ENCODE measurements at regions of chr11 and their contacts with region 1.

Region 1: DNA sequence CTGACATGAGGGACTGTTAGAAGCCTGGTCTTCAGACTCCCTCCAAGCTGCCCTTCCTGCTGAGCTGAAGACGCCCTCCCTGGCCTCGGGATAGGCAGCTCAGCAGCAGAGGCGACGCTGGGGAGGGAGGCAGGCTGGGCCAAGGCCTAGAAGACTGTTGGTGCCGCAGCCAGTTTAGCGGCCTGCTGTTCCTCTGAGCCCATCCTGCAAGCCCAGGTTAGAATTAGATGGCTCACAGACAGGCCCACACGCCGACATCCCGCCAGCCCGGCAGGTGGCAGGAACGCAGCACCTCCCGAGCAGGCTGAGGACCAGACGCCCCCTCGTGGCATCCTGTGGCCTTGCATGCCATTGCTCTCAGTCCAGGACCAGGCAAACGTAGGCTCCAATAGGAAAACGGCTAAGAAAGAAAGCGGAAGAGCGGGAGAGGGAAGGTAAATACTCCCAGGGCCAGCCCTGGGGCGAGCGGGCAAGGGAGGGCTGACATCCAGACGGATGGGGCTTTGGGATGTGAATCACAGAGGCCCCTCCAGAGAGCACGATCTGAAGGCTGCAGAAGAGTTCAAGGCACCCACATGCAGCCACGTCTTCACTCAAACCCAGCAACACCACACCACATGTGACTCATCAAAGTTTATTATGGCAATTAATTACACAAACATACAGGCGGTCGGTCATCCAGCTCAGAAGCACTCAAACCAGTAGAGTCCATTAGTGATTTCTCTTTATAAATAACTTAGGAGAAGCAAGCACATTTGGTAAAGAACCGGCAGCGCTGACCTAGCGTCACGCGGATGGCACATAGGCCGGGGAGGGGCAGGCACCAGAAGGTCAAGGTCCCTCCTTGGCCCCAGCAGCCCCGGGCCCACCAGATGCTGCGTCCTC is 27.6 kb downstream of the CD5 start:
- DNase-seq: peak; percentile 80
- H3K4me3 ChIP-seq: peak overlapping the region in 1 of 3 experiments; percentile 6
- H3K27ac ChIP-seq: peak overlapping the region; percentile 9
- H3K4me1 ChIP-seq: peaks cover 11% of the 10 kb centered on the region
- H3K27me3 ChIP-seq: no peaks in the 10 kb centered on the region
- CTCF ChIP-seq: peak; percentile 99 to 100

Region 2: DNA sequence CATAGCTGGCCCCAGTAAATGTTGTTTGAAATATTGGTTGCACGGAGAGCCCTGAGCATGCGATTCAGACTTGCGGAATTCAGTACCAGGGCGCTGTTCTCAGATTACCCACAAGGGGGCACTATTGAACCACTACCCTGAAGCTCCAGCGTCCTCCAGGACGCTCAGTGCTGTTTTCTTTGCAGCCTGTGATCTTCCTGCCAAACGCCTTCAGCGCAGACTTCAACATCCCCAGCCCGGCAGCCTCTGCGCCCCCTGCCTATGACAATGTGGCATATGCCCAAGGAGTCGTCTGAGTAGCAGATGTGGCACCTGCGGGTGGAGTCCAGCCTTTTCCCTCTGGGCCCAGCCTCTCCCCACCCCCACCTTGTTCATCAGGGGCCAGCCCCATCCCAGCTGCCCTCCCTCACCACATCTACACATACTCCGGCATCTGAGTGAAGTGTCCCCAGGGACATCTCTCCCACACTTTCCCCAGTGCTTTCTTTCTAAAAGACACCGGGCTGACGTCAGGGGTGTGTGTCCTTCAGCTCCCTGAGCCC is 354.4 kb before region 1 on chr11:
- CTCF ChIA-PET with region 1: no interaction called
- dilution Hi-C with region 1: no loop called
- in situ Hi-C with region 1: no loop called
- intact Hi-C with region 1: loop called (anchors 1 kb)
- DNase-seq: peak; percentile 74
- H3K4me3 ChIP-seq: no peak overlapping the region
- H3K27ac ChIP-seq: no peak overlapping the region
- H3K4me1 ChIP-seq: no peaks in the 10 kb centered on the region
- H3K27me3 ChIP-seq: no peaks in the 10 kb centered on the region
- CTCF ChIP-seq: peak; percentile 89 to 93

Region 3: DNA sequence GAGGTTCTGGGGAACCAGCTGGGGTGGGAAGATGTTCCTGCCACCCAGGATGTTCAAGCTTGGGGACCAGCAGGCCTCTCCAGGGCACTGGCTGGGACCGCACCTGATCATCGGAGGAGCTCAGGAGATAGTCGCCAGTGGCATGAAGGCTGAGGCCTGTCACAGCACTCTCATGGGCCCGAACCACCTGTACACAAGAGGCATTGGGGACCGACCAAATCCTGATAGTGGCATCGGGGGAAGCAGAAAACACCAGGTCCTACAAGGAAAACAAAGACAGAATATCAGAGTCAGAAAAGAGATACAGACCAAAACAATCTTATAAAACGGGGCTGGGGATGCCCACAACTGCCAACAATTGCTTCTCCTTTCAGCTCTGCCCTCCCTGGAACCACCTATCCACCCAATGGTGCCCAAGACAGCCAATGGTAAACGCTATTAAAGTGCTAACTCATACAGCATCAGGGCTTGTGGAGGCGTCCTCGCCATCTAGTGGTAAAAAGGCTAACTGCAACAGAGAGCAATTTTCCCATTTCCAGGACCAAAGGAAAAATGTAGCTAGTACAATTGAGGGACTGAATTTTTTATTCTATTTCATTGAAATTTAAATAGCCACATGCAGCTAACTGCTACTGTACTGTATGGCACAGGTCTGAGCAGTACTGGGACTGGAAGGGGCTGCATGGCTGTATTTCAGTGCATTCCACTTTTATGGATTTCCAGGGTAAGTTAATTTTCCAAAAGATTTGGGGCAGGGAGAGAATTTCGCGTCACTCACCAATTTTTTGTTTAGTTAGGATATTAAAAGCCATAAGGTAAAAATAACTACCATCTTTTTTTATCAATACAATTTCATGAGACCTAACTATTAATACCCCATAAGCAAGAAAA is 230.6 kb before region 1 on chr11:
- CTCF ChIA-PET with region 1: interaction called, 5 read pairs
- dilution Hi-C with region 1: no loop called
- in situ Hi-C with region 1: no loop called
- intact Hi-C with region 1: loop called (anchors 5 kb)
- DNase-seq: peak; percentile 51
- H3K4me3 ChIP-seq: no peak overlapping the region
- H3K27ac ChIP-seq: no peak overlapping the region
- H3K4me1 ChIP-seq: no peaks in the 10 kb centered on the region
- H3K27me3 ChIP-seq: no peaks in the 10 kb centered on the region
- CTCF ChIP-seq: peak; percentile 94 to 99

Region 4: DNA sequence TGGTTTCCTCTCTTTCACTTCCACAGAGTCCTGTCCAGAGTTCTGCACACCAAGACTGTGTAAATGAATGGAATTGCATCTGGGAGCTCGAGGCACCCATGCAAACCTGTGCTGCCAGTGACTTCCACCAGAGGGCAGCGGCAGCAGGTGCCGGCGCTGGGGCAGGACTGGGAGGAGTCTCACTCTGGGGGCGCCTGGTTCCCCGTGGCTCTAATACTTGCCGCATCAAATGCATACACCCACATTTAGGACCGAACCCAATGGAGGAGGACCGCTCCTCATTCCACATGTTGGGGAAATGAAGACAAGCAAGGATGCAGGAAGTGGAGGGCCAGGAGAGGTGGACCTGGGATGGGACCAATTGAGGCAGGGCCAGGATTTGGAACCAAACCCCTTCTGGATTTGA is 159.5 kb before region 1 on chr11:
- CTCF ChIA-PET with region 1: no interaction called
- dilution Hi-C with region 1: no loop called
- in situ Hi-C with region 1: no loop called
- intact Hi-C with region 1: loop called (anchors 1 kb)
- DNase-seq: peak; percentile 34
- H3K4me3 ChIP-seq: no peak overlapping the region
- H3K27ac ChIP-seq: no peak overlapping the region
- H3K4me1 ChIP-seq: peaks cover 6% of the 10 kb centered on the region
- H3K27me3 ChIP-seq: no peaks in the 10 kb centered on the region
- CTCF ChIP-seq: peak; percentile 91 to 94

Region 5: GRCh38 chr11:61152816-61153592 is 23.1 kb after region 1 on chr11:
- CTCF ChIA-PET with region 1: no interaction called
- dilution Hi-C with region 1: no loop called
- in situ Hi-C with region 1: no loop called
- intact Hi-C with region 1: loop called (anchors 2 kb)
- DNase-seq: peak; percentile 79
- H3K4me3 ChIP-seq: no peak overlapping the region
- H3K27ac ChIP-seq: peak overlapping the region; percentile 82
- H3K4me1 ChIP-seq: peaks cover 44% of the 10 kb centered on the region
- H3K27me3 ChIP-seq: no peaks in the 10 kb centered on the region
- CTCF ChIP-seq: no peak

Region 6: GRCh38 chr11:61187505-61188130 is 57.7 kb after region 1 on chr11:
- CTCF ChIA-PET with region 1: no interaction called
- dilution Hi-C with region 1: no loop called
- in situ Hi-C with region 1: no loop called
- intact Hi-C with region 1: loop called (anchors 1 kb)
- DNase-seq: peak; percentile 40
- H3K4me3 ChIP-seq: no peak overlapping the region
- H3K27ac ChIP-seq: no peak overlapping the region
- H3K4me1 ChIP-seq: no peaks in the 10 kb centered on the region
- H3K27me3 ChIP-seq: no peaks in the 10 kb centered on the region
- CTCF ChIP-seq: peak; percentile 92 to 99

Region 7: DNA sequence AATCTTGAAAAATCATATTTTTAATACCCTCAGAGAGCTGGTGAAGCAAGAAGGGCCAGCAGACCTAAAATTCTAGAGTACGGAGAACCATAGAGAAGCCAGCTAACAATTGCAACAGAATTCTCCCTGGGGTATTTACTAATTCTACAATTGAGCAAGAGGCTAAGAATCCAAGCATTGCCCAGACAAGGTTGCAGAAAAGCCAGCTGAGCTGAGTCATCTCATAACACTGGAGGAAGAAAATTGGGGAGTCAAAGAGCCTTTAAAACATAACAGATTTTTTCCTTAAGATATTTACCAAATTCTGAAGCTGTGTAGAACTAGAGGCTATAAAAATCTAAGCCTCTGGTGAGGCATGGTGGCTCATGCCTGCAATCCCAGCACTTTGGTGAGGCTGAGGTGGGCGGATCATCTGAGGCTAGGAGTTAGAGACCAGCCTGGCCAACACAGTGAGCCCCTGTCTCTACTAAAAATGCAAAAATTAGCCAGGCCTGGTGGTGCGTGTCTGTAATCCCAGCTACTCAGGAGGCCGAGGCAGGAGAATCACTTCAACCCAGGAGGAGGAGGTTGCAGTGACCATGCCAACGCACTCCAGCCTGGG is 248.9 kb after region 1 on chr11:
- CTCF ChIA-PET with region 1: no interaction called
- dilution Hi-C with region 1: no loop called
- in situ Hi-C with region 1: no loop called
- intact Hi-C with region 1: no loop called
- DNase-seq: peak; percentile 92
- H3K4me3 ChIP-seq: no peak overlapping the region
- H3K27ac ChIP-seq: peak overlapping the region; percentile 65
- H3K4me1 ChIP-seq: peaks cover 33% of the 10 kb centered on the region
- H3K27me3 ChIP-seq: no peaks in the 10 kb centered on the region
- CTCF ChIP-seq: no peak